Right lobe of liver (tissue), 6 donors: ENCODE measurements at regions of chr6 and their contacts with region 1.

Region 1: GRCh38 chr6:26064619-26065257 is 22.5 kb upstream of the HFE start:
- DNase-seq: no peak
- ATAC-seq: peak; percentile 71 to 78 (median 74)
- H3K4me3 ChIP-seq: no peak overlapping the region
- H3K27ac ChIP-seq: no peak overlapping the region
- H3K4me1 ChIP-seq: peaks cover 0 to 6% (median 0%) of the 10 kb centered on the region in 4 donors
- H3K27me3 ChIP-seq: no peaks in the 10 kb centered on the region
- CTCF ChIP-seq: peak; percentile 74 to 85 (median 76)
- POLR2A ChIP-seq: no peak

Region 2: GRCh38 chr6:26097268-26097875 is 32.6 kb after region 1 on chr6:
- intact Hi-C with region 1: loop called (anchors 5 kb)
- DNase-seq: peak in 2 of 3 donors; percentile 34 to 65
- ATAC-seq: peak; percentile 94 to 95 (median 94)
- H3K4me3 ChIP-seq: no peak overlapping the region
- H3K27ac ChIP-seq: no peak overlapping the region
- H3K4me1 ChIP-seq: peaks cover 0 to under 1% (median 0%) of the 10 kb centered on the region in 4 donors
- H3K27me3 ChIP-seq: no peaks in the 10 kb centered on the region
- CTCF ChIP-seq: peak; percentile 78 to 90 (median 84)
- POLR2A ChIP-seq: no peak

Region 3: GRCh38 chr6:26103770-26104456 is 39.2 kb after region 1 on chr6:
- intact Hi-C with region 1: loop called (anchors 5 kb)
- DNase-seq: peak; percentile 87 to 93 (median 93)
- ATAC-seq: peak; percentile 85 to 93 (median 89)
- H3K4me3 ChIP-seq: peak overlapping the region; percentile 27 to 57 (median 52)
- H3K27ac ChIP-seq: peak overlapping the region; percentile 75 to 90 (median 82)
- H3K4me1 ChIP-seq: peaks cover 0 to 10% (median 4%) of the 10 kb centered on the region in 4 donors
- H3K27me3 ChIP-seq: no peaks in the 10 kb centered on the region
- CTCF ChIP-seq: peak; percentile 23 to 34 (median 26)
- POLR2A ChIP-seq: peak; percentile 93